Mammary epithelial cell (primary cell): ENCODE measurements at regions of chr19 and their contacts with region 1.

Region 1: DNA sequence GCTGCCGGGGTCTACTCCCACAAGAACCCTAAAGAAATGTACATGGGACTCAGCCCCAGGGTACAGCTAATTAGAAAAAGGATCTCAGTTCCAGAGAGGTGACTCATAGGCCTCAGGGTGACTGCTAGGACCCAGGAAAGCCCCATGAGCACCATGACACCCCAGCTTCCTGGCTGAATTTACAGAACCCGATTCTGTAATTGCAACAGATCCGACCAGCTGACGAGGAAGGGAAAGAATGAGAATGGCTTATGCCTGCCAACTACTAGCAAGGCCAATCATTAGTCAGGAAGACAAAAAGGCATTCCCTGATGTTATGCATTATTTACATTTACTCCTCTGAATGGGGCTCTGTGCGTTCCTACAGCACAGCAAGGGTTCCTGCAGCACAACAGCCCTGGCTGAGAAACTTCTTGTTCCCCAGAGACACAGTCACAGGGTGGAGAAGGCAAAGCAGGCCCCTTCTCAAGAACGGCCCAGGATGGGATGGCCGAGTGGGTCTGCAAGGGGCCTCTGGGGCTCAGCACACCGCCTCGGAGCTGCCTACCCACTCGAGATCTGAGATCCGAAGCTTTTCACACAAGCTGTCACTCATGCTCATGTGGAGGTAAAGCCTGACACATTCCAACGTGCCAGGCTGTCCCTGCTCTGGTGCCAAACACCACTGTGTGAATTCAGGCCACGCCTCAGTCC is 27.2 kb downstream of the PBX4 start:
- DNase-seq: peak; percentile 98
- H3K4me3 ChIP-seq: peak overlapping the region in 1 of 3 experiments; percentile 0
- H3K27ac ChIP-seq: peak overlapping the region; percentile 65
- H3K4me1 ChIP-seq: peaks cover 18% of the 10 kb centered on the region
- H3K27me3 ChIP-seq: no peaks in the 10 kb centered on the region
- CTCF ChIP-seq: no peak

Region 2: DNA sequence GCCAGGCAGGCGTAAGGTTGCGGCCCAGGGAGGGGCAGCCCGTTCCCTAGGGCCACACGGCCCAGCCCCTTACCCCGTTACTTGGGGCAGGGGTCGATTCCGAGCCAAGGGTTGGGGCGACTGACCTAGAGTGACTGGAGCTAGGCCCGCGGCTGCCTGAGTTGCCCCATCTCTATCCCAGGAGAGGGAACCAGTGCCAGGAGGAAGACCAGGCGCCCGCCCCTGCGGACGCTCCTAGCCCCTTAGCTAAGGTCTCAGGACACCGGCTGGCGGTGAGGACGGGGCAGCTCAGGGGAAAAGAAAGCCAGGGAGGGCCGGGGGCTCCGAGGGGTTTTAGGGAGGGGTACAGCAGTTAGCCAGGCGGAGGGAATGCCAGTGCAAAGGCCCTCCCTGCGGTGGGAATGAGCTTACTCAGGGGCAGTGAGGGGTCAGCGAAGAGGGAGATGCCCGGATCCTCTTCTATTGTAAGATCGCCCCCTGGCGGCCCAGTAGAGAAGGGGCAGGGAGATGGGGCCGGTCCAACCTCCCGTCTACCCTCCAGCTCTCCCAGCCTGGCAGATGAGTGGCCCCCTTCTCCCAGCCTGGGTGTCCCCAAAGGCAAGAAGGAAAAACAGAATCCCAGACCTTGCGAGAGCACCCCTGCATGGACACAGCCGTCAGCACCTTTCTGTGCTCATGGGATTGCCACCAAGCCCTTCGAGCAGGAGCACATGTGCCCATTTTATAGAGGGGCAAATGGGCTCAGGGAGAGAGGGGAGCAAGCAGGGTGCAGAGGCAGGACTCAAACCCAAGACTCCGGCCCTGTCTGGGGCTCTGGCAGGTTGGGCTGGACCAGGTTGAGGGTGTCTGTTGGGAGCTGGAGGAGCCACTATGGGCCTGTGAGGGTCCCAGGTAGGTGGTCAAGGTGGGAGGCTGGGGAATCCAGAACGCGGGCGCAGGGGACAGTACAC is 36.9 kb before region 1 on chr19:
- CTCF ChIA-PET with region 1: no interaction called
- dilution Hi-C with region 1: loop called (anchors 5 kb)
- in situ Hi-C with region 1: no loop called
- intact Hi-C with region 1: no loop called
- DNase-seq: no peak
- H3K4me3 ChIP-seq: no peak overlapping the region
- H3K27ac ChIP-seq: no peak overlapping the region
- H3K4me1 ChIP-seq: no peaks in the 10 kb centered on the region
- H3K27me3 ChIP-seq: no peaks in the 10 kb centered on the region
- CTCF ChIP-seq: peak; percentile 66 to 79

Region 3: DNA sequence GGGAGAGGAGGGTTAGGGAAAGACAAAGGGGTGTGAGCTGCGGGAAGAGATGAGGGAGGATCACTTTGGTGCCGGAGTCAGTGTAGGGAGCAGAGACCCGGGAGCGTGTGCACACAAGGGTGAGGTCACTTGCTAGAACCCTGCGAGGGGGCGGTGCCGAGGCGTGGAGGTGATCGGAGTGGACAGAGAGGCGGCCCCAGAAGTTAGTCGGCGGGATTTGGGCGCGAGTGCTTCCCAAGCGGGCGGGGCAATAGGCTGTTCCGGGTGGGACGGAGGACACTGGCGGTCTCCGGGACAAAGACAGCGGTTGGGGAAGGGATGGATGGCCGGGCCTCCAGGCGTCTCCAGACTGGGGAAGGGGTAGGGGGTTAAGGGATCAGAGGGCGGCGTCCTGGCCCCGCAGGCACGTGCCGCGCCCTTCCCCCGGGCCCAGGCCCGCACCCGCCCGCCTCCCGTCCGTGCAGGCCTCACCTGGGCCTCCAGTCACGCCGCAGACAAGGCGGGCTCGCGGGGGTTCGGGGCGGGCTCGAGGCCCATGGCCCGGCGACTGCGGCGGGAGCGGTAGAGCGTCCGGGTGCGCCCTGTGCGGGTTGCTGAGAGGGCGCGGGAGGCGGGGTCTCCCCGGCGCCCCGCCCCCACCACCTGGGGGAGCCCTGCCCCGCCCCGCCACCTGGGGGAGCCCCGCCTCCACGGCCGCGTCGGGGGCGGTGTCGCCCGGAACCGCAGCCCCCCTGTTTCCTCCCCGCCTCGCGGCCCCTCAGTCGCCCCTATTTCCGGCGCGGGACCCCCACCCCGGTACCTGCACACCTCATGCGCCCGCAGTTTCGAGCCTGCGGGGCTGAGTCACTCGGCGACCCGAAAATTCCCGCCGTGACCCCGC is 36.6 kb after region 1 on chr19 and contains the start of gene LPAR2:
- CTCF ChIA-PET with region 1: no interaction called
- dilution Hi-C with region 1: no loop called
- in situ Hi-C with region 1: no loop called
- intact Hi-C with region 1: loop called (anchors 5 kb)
- DNase-seq: peak; percentile 53
- H3K4me3 ChIP-seq: peak within 1 kb of the TSS; percentile 58 to 79 (median 68)
- H3K27ac ChIP-seq: peak within 1 kb of the TSS; percentile 20
- H3K4me1 ChIP-seq: peaks cover 14% of the 10 kb centered on the region
- H3K27me3 ChIP-seq: no peaks in the 10 kb centered on the region
- CTCF ChIP-seq: no peak
- total RNA-seq, gene LPAR2: 20.2 to 27.9 TPM